ENCODE measurements at regions of chr2 and their contacts with region 1.

Region 1: GRCh38 chr2:213021971-213022899 is 129.2 kb downstream of the IKZF2 start:
- DNase-seq: no peak
- H3K4me3 Mint-ChIP-seq: no peak overlapping the region
- H3K27ac Mint-ChIP-seq: peak overlapping the region; percentile 87
- H3K4me1 Mint-ChIP-seq: peaks cover 28% of the 10 kb centered on the region
- H3K27me3 Mint-ChIP-seq: peaks cover 20% of the 10 kb centered on the region

Region 2: DNA sequence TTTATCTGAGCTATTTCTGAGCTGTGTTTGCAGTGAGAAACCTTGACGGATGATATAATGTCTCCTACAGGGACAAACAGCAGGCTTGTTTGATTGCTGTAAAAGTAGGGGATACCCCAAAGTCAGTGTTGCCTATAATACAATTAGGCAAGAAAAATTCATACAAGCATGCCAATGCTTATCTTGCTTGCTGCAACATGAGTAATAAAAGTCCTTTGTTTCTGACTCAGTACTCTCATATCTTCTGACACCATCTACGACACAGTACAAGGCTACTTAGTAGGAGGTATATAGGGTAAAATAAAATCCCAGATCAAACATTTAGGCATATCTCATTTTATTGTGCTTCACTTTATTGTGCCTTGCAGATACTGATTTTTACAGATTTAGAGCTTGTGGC is 516.6 kb before region 1 on chr2:
- intact Hi-C with region 1: no loop called
- DNase-seq: no peak
- H3K4me3 Mint-ChIP-seq: no peak overlapping the region
- H3K27ac Mint-ChIP-seq: no peak overlapping the region
- H3K4me1 Mint-ChIP-seq: no peaks in the 10 kb centered on the region
- H3K27me3 Mint-ChIP-seq: no peaks in the 10 kb centered on the region

Region 3: GRCh38 chr2:212730994-212731393 is 291.2 kb before region 1 on chr2:
- intact Hi-C with region 1: loop called (anchors 5 kb)
- DNase-seq: no peak
- H3K4me3 Mint-ChIP-seq: no peak overlapping the region
- H3K27ac Mint-ChIP-seq: no peak overlapping the region
- H3K4me1 Mint-ChIP-seq: peaks cover 5% of the 10 kb centered on the region
- H3K27me3 Mint-ChIP-seq: peaks cover 1% of the 10 kb centered on the region

Region 4: GRCh38 chr2:212915121-212915782 is 107.0 kb before region 1 on chr2:
- intact Hi-C with region 1: loop called (anchors 1 kb)
- DNase-seq: no peak
- H3K4me3 Mint-ChIP-seq: peak overlapping the region; percentile 11
- H3K27ac Mint-ChIP-seq: peak overlapping the region; percentile 54
- H3K4me1 Mint-ChIP-seq: peaks cover 30% of the 10 kb centered on the region
- H3K27me3 Mint-ChIP-seq: peaks cover 6% of the 10 kb centered on the region

Region 5: GRCh38 chr2:212928681-212929080 is 93.6 kb before region 1 on chr2:
- intact Hi-C with region 1: loop called (anchors 2 kb)
- DNase-seq: no peak
- H3K4me3 Mint-ChIP-seq: no peak overlapping the region
- H3K27ac Mint-ChIP-seq: no peak overlapping the region
- H3K4me1 Mint-ChIP-seq: peaks cover 38% of the 10 kb centered on the region
- H3K27me3 Mint-ChIP-seq: no peaks in the 10 kb centered on the region

Region 6: DNA sequence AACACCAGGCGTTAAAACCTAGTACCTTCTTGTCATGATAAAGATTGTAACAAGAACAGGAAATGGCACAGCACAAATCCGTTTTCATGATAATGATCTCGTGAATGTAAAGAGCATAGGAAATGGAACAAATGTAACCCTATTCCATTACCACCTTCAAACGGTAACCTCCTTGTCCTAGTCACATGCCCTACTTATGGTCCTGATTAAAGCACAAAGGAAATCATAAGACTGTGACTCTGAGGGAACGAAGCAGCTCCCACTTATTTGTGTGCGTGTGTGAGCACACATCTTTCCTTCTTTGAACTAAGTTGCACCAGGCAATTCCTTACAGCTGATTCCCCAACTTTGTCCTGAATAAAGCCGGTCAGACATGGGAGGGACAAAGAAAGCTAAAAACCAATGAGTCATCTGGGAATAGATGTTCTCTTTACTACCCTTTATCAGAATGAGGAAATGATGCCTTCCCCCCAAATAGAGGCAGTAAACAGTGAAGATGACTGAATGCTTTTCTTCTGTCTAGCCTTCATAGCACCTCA is 63.4 kb before region 1 on chr2:
- intact Hi-C with region 1: loop called (anchors 1 kb)
- DNase-seq: no peak
- H3K4me3 Mint-ChIP-seq: peak overlapping the region; percentile 19
- H3K27ac Mint-ChIP-seq: peak overlapping the region; percentile 75
- H3K4me1 Mint-ChIP-seq: peaks cover 46% of the 10 kb centered on the region
- H3K27me3 Mint-ChIP-seq: no peaks in the 10 kb centered on the region

Region 7: GRCh38 chr2:213034585-213034984 is 12.3 kb after region 1 on chr2:
- intact Hi-C with region 1: loop called (anchors 1 kb)
- DNase-seq: no peak
- H3K4me3 Mint-ChIP-seq: no peak overlapping the region
- H3K27ac Mint-ChIP-seq: peak overlapping the region; percentile 72
- H3K4me1 Mint-ChIP-seq: peaks cover 25% of the 10 kb centered on the region
- H3K27me3 Mint-ChIP-seq: peaks cover 14% of the 10 kb centered on the region